ENCODE measurements at regions of chr4 and their contacts with region 1.

Region 1: GRCh38 chr4:121656269-121656641 is 40.5 kb downstream of the ANXA5 start:
- DNase-seq: no peak
- H3K4me3 ChIP-seq: no peak overlapping the region
- H3K27ac ChIP-seq: no peak overlapping the region
- H3K4me1 ChIP-seq: no peaks in the 10 kb centered on the region
- H3K27me3 ChIP-seq: no peaks in the 10 kb centered on the region
- CTCF ChIP-seq: peak; percentile 15 to 58 (median 54); a peak in 3 of 4 replicates
- EP300 ChIP-seq: no peak
- POLR2A ChIP-seq: no peak
- RAD21 ChIP-seq: peak; percentile 71 to 73

Region 2: GRCh38 chr4:121462660-121463261 is 193.5 kb before region 1 on chr4:
- CTCF ChIA-PET with region 1: interaction called, 18 read pairs
- POLR2A ChIA-PET with region 1: no interaction called
- DNase-seq: no peak
- H3K4me3 ChIP-seq: no peak overlapping the region
- H3K27ac ChIP-seq: no peak overlapping the region
- H3K4me1 ChIP-seq: 0 out of 7 replicates have a peak, but pooled peaks cover 0 to 2% (median 0%) of the 10 kb centered on the region in 4 experiments
- H3K27me3 ChIP-seq: no peaks in the 10 kb centered on the region
- CTCF ChIP-seq: peak in 2 of 3 experiments; percentile 73 to 90; a peak in 3 of 4 replicates
- EP300 ChIP-seq: no peak
- POLR2A ChIP-seq: no peak
- RAD21 ChIP-seq: peak; percentile 63 to 66

Region 3: DNA sequence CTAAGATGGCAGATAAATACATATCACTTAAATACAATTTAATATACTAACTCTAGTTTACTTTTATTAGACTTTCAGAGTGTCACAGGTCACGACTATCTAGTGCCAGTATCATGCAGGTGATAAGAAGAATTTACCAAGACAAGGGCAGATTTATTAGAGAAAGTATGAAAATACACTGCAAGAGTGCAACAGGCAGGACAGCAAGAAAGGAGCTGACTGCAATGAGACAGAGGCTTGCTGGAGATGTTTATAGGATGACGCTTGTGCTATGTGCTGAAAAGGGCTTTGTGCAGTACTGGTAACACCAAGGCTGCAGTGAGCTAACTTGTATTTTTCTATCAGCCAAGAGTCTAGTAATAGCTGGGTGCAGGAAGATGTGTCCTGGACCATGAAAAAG is 178.8 kb before region 1 on chr4:
- CTCF ChIA-PET with region 1: interaction called, 11 read pairs
- POLR2A ChIA-PET with region 1: no interaction called
- DNase-seq: no peak
- H3K4me3 ChIP-seq: no peak overlapping the region
- H3K27ac ChIP-seq: no peak overlapping the region
- H3K4me1 ChIP-seq: no peaks in the 10 kb centered on the region
- H3K27me3 ChIP-seq: no peaks in the 10 kb centered on the region
- CTCF ChIP-seq: no peak
- EP300 ChIP-seq: no peak
- POLR2A ChIP-seq: no peak
- RAD21 ChIP-seq: no peak

Region 4: DNA sequence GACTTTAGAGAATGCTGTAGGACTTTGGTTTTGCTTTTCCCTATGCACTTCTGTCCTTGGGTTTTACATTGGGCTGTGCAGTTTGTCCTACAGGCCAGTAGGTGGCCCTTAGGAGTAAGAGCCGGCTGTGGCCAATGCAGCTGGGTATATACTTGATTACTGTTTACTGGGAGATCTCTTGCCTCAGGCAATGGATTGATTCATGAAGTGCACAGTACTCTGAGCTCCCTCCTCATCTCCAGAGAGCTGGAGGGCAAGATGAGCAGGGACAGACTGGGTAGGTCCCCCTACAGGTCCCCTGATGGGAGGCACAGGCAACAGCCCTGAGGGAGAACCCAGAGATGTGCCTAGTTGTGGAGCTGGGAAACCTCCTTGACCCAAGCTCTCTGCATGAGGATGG is 171.6 kb before region 1 on chr4:
- CTCF ChIA-PET with region 1: interaction called, 33 read pairs
- POLR2A ChIA-PET with region 1: no interaction called
- DNase-seq: no peak
- H3K4me3 ChIP-seq: no peak overlapping the region
- H3K27ac ChIP-seq: no peak overlapping the region
- H3K4me1 ChIP-seq: no peaks in the 10 kb centered on the region
- H3K27me3 ChIP-seq: no peaks in the 10 kb centered on the region
- CTCF ChIP-seq: peak; percentile 59 to 87 (median 82)
- EP300 ChIP-seq: no peak
- POLR2A ChIP-seq: no peak
- RAD21 ChIP-seq: peak; percentile 70 to 75

Region 5: DNA sequence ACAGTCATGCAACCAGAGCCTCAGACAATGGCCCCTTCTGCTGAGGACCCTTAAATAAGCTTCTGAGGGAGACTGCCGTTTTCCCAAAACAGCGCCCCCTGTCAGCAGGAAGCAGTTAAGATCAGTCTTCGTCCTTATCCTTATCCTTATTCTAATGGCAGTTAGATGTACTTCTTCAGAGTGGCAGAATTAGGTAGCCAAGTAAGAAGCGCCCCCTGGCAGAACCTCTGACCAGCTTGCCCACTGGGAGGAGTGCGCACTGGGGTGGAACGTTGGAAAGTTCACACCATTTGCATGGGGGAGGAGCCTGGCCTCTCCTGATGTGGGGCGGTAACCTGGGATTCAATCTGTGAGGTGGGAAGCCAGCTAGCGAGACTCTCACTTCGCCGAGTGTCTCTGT is 141.8 kb before region 1 on chr4:
- CTCF ChIA-PET with region 1: interaction called, 10 read pairs
- POLR2A ChIA-PET with region 1: no interaction called
- DNase-seq: peak; percentile 65 to 72
- H3K4me3 ChIP-seq: no peak overlapping the region
- H3K27ac ChIP-seq: no peak overlapping the region
- H3K4me1 ChIP-seq: peaks cover 0 to 4% (median 0%) of the 10 kb centered on the region in 4 experiments; a peak in 2 of 7 replicates
- H3K27me3 ChIP-seq: no peaks in the 10 kb centered on the region
- CTCF ChIP-seq: peak; percentile 8 to 78 (median 65)
- EP300 ChIP-seq: no peak
- POLR2A ChIP-seq: no peak
- RAD21 ChIP-seq: peak in 1 of 2 experiments; percentile 43; a peak in 3 of 4 replicates

Region 6: DNA sequence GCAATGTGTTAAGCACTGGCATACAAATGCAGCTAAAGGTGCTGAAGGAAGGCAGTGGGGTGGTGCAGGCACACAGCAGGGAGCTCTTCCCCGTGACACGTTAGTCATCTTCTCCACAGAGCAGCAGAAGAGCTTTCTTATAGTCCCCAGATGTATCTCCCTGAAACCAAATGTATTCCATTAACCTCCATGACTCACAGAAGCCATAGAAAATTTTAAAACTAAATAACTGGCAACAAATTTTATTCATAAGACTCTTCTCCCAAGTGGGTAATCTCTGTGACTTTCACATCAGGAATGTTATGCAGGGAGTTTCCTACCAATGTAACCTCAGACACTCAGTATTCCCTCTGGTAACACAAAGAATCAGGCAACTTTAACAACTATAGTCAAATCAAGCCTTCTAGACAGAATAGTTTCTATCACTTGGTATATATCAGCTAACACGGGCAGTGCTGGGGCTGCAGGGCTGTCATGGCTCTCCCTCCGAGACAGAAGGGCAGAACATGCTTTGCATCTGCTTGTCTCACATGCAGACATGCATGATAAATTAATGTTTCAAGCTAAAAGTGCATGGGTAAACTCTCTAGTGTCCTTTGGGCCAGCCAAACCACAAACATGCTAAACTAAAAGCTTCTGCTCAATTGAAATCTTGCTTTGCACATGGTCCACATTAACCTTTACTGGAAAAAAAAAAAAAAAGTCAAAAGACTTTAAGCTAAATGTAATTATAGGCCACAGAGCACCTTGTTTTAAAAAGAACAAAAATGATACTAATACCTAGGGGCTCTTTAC is 12.3 kb after region 1 on chr4:
- CTCF ChIA-PET with region 1: interaction called, 14 read pairs
- POLR2A ChIA-PET with region 1: no interaction called
- DNase-seq: no peak
- H3K4me3 ChIP-seq: no peak overlapping the region
- H3K27ac ChIP-seq: no peak overlapping the region
- H3K4me1 ChIP-seq: no peaks in the 10 kb centered on the region
- H3K27me3 ChIP-seq: peaks cover 0 to 1% (median 0%) of the 10 kb centered on the region in 4 experiments; a peak in 1 of 7 replicates
- CTCF ChIP-seq: no peak
- EP300 ChIP-seq: no peak
- POLR2A ChIP-seq: no peak
- RAD21 ChIP-seq: no peak

Measured in H1 (cell line).